ENCODE measurements at regions of chr12 and their contacts with region 1.

Region 1: DNA sequence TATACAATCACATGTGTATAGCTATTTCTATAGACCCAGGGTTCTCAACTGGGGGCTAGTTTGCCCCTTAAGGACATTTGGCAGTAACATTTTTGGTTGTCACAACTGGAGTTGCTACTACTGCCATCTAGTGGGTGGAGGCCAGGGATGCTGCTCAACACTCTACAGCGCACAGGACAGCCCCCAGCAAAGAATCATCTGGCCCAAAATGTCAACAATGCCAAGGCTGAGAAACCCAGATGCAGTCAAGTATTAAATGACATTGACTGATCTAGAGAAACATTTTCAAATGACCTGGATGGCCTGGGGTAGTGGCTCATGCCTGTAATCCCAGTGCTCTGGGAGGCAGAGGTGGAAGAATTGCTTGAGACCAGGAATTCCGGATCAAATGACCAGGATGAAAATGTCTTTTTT is 5.8 kb downstream of the WSB2 start:
- DNase-seq: peak in 1 of 2 donors; percentile 30
- H3K4me3 ChIP-seq: no peak overlapping the region
- H3K27ac ChIP-seq: peak overlapping the region in 1 of 2 donors; percentile 57
- H3K4me1 ChIP-seq: peaks cover 0 to 83% (median 37%) of the 10 kb centered on the region in 4 donors
- H3K27me3 ChIP-seq: no peaks in the 10 kb centered on the region
- CTCF ChIP-seq: peak; percentile 17 to 48

Region 2: GRCh38 chr12:118016424-118017264 is 38.5 kb before region 1 on chr12 and contains the start of gene RFC5:
- intact Hi-C with region 1: loop called (anchors 5 kb)
- DNase-seq: peak; percentile 97 to 98
- H3K4me3 ChIP-seq: peak within 1 kb of the TSS; percentile 65 to 96
- H3K27ac ChIP-seq: peak within 1 kb of the TSS; percentile 13 to 72
- H3K4me1 ChIP-seq: peaks cover 0 to 16% (median 7%) of the 10 kb centered on the region in 4 donors
- H3K27me3 ChIP-seq: no peaks in the 10 kb centered on the region
- CTCF ChIP-seq: no peak

Region 3: DNA sequence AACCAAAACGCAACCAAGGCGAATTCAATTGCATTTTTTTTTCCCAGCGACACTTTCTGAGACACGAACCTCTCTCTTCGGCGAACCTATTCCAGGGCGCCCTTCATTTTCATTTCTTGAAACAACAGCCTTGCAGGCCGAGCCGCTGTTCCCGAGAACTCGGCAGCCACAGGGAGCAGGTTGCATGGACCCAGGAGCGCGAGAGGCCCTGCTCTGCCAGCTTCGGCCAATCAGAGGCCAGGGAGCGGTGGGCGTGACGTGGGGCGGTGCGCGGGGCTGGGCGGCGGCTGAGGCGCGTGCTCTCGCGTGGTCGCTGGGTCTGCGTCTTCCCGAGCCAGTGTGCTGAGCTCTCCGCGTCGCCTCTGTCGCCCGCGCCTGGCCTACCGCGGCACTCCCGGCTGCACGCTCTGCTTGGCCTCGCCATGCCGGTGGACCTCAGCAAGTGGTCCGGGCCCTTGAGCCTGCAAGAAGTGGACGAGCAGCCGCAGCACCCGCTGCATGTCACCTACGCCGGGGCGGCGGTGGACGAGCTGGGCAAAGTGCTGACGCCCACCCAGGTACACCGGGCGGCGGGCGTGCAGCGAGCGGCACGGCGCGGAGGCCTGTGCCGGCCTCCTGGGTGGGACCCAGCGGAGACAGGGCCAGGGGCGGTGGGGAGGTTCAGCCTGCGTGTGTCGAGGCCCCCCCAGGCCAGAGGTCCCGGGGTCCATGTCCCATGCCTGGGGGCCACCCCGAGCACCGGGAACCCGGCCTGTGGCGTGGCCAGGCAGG is 80.8 kb after region 1 on chr12 and contains the start of gene PEBP1:
- intact Hi-C with region 1: loop called (anchors 10 kb)
- DNase-seq: peak; percentile 95 to 98
- H3K4me3 ChIP-seq: peak within 1 kb of the TSS; percentile 88 to 99
- H3K27ac ChIP-seq: peak within 1 kb of the TSS; percentile 89 to 95
- H3K4me1 ChIP-seq: peaks cover 0 to 33% (median 21%) of the 10 kb centered on the region in 4 donors
- H3K27me3 ChIP-seq: no peaks in the 10 kb centered on the region
- CTCF ChIP-seq: peak in 1 of 2 experiments; percentile 3

Region 4: DNA sequence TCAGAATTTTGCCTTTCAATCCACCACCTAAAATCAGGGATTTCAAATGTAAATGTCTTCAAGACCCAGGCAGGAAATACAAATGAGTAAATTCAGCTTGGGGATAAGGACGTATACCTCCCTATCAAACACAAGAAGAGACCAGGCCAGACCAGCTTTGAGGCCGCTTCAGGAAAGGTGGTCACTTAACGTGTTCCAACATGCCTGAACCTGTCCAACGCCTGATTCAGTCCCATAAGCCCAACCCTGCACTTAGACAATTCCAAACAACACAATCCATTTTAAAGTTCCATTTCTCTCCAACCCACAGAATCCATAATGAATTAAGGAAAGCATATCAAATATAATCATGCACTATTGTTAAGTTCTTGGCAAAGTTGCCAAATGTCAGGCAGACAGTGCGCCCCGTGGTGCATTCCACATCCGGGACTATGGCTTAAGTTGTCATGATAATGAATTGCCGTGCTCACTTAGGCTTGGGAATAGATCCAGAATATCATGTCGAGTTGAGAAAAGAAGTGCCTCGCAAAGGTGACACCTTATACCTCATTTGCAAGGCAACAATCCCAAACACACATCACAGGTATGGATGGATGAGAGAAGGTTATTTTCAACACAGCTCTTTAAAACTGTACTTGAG is 1314.9 kb after region 1 on chr12:
- intact Hi-C with region 1: no loop called
- DNase-seq: no peak
- H3K4me3 ChIP-seq: no peak overlapping the region
- H3K27ac ChIP-seq: no peak overlapping the region
- H3K4me1 ChIP-seq: no peaks in the 10 kb centered on the region
- H3K27me3 ChIP-seq: no peaks in the 10 kb centered on the region
- CTCF ChIP-seq: no peak

Measured in tibial artery (tissue), 4 donors.